Activated CD8-positive, alpha-beta T cell treated with anti-CD3 and anti-CD28 coated beads, Interleukin-2, amount 10 ng/mL, durations not matched to agents 7 days and 5 days (primary cell): ENCODE measurements at regions of chr2 and their contacts with region 1.

Region 1: GRCh38 chr2:240513549-240514287 is 44.1 kb downstream of the ANKMY1 start:
- DNase-seq: peak; percentile 88
- ATAC-seq: peak; percentile 98
- H3K4me3 Mint-ChIP-seq: no peak overlapping the region
- H3K27ac Mint-ChIP-seq: peak overlapping the region; percentile 47
- H3K4me1 Mint-ChIP-seq: peaks cover 7% of the 10 kb centered on the region
- H3K27me3 Mint-ChIP-seq: no peaks in the 10 kb centered on the region

Region 2: DNA sequence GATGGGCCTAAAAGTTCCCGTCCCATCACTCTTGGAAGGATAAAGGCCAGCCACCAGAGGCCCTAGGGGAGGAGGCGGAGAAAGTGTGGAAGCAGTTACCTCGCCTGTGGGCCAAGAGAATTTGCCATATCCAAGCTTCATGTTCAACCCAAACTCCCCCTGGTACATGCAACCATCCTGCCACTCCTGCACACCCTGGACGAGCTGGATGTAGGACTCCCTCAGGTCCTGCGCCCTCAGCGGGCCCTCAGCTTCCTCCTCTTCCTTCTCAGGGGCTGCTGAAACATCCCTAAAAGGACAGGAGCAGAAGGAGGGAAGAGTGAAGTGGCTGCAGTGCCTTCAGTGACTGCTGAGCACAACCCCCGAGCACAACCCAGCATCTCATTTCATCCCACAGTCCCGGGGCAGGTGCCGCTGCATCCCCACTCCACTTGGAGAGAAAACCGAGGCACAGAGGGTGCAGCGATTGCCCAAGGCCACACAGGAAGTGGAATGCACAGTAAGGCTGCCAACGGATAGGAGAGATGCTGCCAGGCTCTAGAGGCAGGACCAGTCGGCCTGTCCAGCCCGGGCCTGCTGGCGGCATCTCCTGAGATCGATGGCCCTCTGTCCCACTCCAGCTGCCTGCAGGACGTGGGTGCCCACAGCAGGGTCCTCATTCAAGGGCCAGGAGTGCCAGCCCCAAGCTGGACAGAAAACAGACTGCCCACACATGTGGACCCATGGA is 41.2 kb after region 1 on chr2:
- CTCF ChIA-PET with region 1: interaction called, 23 read pairs
- POLR2A ChIA-PET with region 1: no interaction called
- DNase-seq: no peak
- ATAC-seq: no peak
- H3K4me3 Mint-ChIP-seq: no peak overlapping the region
- H3K27ac Mint-ChIP-seq: no peak overlapping the region
- H3K4me1 Mint-ChIP-seq: peaks cover 30% of the 10 kb centered on the region
- H3K27me3 Mint-ChIP-seq: no peaks in the 10 kb centered on the region

Region 3: DNA sequence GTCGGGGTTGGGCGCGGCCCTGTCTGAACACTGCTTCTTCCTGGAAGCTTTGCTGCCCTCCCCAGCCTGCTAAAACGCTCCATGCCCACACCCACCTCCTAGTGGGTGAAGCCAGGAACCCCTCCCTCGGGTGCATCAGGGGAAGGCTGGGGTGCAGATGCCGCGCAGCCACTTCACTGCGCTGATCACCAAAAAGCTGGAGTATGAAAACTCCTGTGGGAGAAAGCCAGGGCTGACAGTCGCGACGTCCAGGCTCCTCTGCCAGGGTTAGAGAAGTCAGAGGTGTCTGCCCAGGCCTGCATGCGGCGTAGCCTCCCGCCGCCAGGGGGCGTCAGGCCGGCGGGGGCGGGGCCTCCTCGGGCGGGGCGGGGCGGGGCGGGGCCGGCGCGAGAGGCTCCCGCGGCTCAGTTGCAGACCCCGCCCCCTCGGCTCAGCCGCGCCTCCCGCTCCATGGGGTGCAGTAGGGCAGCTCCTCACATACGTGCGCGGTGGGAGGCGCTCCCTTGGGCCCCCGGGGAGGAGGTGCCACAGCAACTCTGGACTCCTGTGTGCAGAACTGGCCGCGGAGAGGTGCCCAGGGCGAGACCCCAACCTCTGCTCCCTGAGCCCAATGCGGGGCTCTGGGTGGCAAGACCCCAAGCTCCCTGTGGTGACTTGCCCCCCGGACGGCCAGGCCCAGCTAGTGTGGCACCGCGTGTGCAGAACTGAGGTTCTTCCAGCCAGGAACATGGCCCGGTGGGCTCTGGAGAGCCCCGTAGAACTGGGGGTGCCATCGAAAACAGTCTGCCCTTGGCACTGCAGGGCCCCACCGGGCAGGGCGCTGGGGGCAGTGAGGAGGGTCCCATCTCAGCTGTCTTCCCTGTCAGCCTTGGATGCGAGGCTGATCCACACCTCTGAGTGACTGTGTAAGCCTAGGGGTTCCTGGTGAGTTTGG is 52.8 kb after region 1 on chr2:
- CTCF ChIA-PET with region 1: interaction called, 43 read pairs
- POLR2A ChIA-PET with region 1: interaction called, 7 read pairs
- DNase-seq: peak; percentile 98
- ATAC-seq: peak; percentile 70
- H3K4me3 Mint-ChIP-seq: peak overlapping the region; percentile 86
- H3K27ac Mint-ChIP-seq: peak overlapping the region; percentile 97
- H3K4me1 Mint-ChIP-seq: peaks cover 77% of the 10 kb centered on the region
- H3K27me3 Mint-ChIP-seq: no peaks in the 10 kb centered on the region

Region 4: GRCh38 chr2:240586198-240586918 is 72.6 kb after region 1 on chr2 and contains the start of gene CAPN10:
- CTCF ChIA-PET with region 1: interaction called, 36 read pairs
- POLR2A ChIA-PET with region 1: no interaction called
- DNase-seq: peak; percentile 98
- ATAC-seq: peak; percentile 91
- H3K4me3 Mint-ChIP-seq: peak within 1 kb of the TSS; percentile 97
- H3K27ac Mint-ChIP-seq: peak within 1 kb of the TSS; percentile 92
- H3K4me1 Mint-ChIP-seq: peaks cover 47% of the 10 kb centered on the region
- H3K27me3 Mint-ChIP-seq: no peaks in the 10 kb centered on the region
- total RNA-seq, gene CAPN10: 53.0 to 61.2 TPM

Region 5: GRCh38 chr2:240840435-240841080 is 326.8 kb after region 1 on chr2:
- CTCF ChIA-PET with region 1: interaction called, 10 read pairs
- POLR2A ChIA-PET with region 1: no interaction called
- DNase-seq: peak; percentile 41
- ATAC-seq: peak; percentile 58
- H3K4me3 Mint-ChIP-seq: no peak overlapping the region
- H3K27ac Mint-ChIP-seq: no peak overlapping the region
- H3K4me1 Mint-ChIP-seq: no peaks in the 10 kb centered on the region
- H3K27me3 Mint-ChIP-seq: peaks cover 13% of the 10 kb centered on the region